Mammary epithelial cell (primary cell): ENCODE measurements at regions of chr6 and their contacts with region 1.

Region 1: DNA sequence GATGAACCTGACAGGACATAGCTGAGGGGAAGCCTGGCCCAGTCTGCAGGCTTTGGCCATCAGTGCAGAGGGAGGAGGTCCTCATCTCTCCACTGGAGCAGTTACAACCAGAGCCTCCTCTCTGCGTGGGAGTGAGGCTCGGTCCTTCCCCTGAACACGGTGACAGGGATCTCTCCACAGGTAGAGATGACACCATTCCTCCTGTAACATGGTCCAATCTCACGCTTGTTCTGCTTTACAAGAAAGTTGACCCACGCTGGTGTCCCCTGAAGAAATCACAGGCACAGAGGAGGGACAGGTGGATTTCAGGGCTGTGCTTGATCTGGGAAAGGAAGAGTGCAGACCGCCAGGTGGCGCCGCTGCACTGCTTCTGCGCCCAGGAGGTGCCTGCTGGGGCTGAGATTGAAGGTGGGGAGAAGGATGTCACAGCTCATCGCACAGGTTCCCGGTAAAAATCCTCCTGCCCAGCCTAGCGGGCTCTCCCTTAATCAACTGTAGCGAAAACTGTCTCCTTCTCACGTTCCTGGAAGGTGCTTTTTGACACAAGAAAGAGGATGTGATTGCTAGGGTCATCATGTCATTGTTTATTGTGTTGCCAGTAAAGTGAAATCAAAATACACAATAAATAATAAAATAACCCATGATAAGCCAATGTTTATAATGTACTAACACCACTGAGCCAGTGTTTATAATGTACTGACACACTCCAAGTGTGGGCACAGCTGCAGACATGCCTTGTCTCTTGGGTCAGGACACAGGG is 20.4 kb downstream of the HLA-G start:
- DNase-seq: peak; percentile 56
- H3K4me3 ChIP-seq: no peak overlapping the region
- H3K27ac ChIP-seq: no peak overlapping the region
- H3K4me1 ChIP-seq: peaks cover 5% of the 10 kb centered on the region
- H3K27me3 ChIP-seq: no peaks in the 10 kb centered on the region
- CTCF ChIP-seq: peak; percentile 78 to 96

Region 2: GRCh38 chr6:29632789-29633533 is 215.1 kb before region 1 on chr6 and contains the start of gene GABBR1:
- CTCF ChIA-PET with region 1: interaction called, 12 read pairs
- dilution Hi-C with region 1: no loop called
- in situ Hi-C with region 1: no loop called
- intact Hi-C with region 1: no loop called
- DNase-seq: peak; percentile 92
- H3K4me3 ChIP-seq: peak within 1 kb of the TSS; percentile 60 to 84 (median 65)
- H3K27ac ChIP-seq: peak within 1 kb of the TSS; percentile 22
- H3K4me1 ChIP-seq: peaks cover 43% of the 10 kb centered on the region
- H3K27me3 ChIP-seq: no peaks in the 10 kb centered on the region
- CTCF ChIP-seq: no peak
- total RNA-seq, gene GABBR1: 14.5 to 78.4 TPM

Region 3: DNA sequence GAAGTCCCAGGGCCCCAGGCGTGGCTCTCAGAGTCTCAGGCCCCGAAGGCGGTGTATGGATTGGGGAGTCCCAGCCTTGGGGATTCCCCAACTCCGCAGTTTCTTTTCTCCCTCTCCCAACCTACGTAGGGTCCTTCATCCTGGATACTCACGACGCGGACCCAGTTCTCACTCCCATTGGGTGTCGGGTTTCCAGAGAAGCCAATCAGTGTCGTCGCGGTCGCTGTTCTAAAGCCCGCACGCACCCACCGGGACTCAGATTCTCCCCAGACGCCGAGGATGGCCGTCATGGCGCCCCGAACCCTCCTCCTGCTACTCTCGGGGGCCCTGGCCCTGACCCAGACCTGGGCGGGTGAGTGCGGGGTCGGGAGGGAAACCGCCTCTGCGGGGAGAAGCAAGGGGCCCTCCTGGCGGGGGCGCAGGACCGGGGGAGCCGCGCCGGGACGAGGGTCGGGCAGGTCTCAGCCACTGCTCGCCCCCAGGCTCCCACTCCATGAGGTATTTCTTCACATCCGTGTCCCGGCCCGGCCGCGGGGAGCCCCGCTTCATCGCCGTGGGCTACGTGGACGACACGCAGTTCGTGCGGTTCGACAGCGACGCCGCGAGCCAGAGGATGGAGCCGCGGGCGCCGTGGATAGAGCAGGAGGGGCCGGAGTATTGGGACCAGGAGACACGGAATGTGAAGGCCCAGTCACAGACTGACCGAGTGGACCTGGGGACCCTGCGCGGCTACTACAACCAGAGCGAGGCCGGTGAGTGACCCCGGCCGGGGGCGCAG is 94.4 kb after region 1 on chr6 and contains the start of gene HLA-A:
- CTCF ChIA-PET with region 1: no interaction called
- dilution Hi-C with region 1: no loop called
- in situ Hi-C with region 1: no loop called
- intact Hi-C with region 1: loop called (anchors 1 kb)
- DNase-seq: peak; percentile 97
- H3K4me3 ChIP-seq: peak within 1 kb of the TSS; percentile 65 to 84 (median 75)
- H3K27ac ChIP-seq: peak within 1 kb of the TSS; percentile 93
- H3K4me1 ChIP-seq: peaks cover 8% of the 10 kb centered on the region
- H3K27me3 ChIP-seq: no peaks in the 10 kb centered on the region
- CTCF ChIP-seq: peak in 1 of 2 donors; percentile 13
- total RNA-seq, gene HLA-A: 217 to 345 TPM

Region 4: GRCh38 chr6:30006170-30007131 is 158.4 kb after region 1 on chr6:
- CTCF ChIA-PET with region 1: no interaction called
- dilution Hi-C with region 1: no loop called
- in situ Hi-C with region 1: loop called (anchors 5 kb)
- intact Hi-C with region 1: no loop called
- DNase-seq: no peak
- H3K4me3 ChIP-seq: peak overlapping the region; percentile 3 to 40 (median 36)
- H3K27ac ChIP-seq: no peak overlapping the region
- H3K4me1 ChIP-seq: peaks cover 17% of the 10 kb centered on the region
- H3K27me3 ChIP-seq: peaks cover 7% of the 10 kb centered on the region
- CTCF ChIP-seq: no peak

Region 5: DNA sequence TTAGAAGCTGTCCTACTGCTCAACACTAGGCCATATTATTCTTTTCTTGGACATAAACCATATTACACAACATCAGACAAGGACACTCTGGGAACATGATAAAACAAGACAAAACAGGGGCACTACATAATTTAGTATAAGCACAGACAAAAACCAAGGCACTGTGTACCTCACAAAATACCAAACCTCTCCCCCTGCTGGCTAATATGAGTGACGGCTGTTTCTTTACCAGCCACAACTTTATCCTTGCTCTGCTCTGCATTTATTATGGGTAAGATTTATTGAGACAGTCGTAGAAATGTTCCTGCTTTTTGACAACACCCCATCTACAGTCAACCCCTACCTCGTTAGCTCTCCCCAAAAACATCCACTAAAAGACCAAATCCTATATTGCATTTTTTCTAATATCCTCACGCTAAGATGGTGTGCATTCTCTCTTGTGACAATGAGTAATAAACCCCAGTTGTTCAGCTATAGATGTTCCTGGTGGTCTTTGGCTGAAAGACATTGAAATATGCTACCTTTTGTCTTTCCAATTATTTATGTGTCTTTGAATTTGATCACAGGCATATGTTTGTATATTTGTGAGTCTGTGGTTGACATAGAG is 189.2 kb after region 1 on chr6:
- CTCF ChIA-PET with region 1: no interaction called
- dilution Hi-C with region 1: no loop called
- in situ Hi-C with region 1: no loop called
- intact Hi-C with region 1: loop called (anchors 1 kb)
- DNase-seq: peak; percentile 32
- H3K4me3 ChIP-seq: no peak overlapping the region
- H3K27ac ChIP-seq: no peak overlapping the region
- H3K4me1 ChIP-seq: no peaks in the 10 kb centered on the region
- H3K27me3 ChIP-seq: no peaks in the 10 kb centered on the region
- CTCF ChIP-seq: peak; percentile 67 to 70

Region 6: DNA sequence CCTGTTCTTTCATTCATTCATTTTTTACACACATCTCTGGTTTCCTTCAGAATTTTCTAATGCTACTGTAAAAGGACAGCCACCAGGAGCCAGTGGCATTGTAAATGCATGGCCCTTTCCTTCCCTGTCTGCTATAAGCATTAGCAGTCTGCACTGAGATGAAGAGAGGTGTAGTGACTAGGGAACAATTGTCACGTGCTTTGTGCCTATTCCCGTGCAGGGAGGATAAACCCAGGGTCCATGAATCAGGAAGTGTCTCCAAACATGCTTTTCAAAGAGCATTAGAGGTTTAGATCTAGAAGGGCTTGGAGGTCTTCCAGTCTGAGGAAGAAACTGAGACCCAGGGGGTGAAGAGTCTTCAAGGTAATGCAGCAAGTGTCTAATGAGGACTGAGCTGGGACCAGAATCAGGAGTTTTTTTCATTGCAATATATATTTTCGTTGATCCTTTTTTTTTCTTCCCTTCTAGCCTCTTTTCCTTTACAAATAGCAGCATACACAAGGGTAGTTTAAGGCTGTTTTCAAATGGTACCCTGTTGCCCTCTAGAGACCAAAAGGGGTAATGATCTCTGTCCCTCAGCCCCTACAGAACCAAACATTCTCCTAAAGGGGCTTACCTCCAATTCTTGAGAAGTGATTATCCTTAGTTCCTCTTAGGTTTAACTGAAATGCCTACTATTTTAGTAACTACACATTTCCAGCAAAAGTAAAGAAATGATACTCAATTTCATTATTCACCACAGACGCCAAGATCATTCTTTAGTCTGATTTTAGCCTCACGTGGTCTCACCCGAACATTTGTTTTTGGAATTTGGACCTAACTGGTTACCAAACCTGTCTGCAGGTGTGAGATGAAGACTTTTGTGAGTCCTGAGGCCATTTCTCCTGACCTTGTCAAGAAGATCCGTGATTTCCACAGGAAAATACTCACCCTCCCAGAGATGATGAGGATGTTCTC is 321.9 kb after region 1 on chr6:
- CTCF ChIA-PET with region 1: no interaction called
- dilution Hi-C with region 1: no loop called
- in situ Hi-C with region 1: loop called in 1 of 2 experiments (anchors 25 kb)
- intact Hi-C with region 1: loop called (anchors 1 kb)
- DNase-seq: peak; percentile 41
- H3K4me3 ChIP-seq: no peak overlapping the region
- H3K27ac ChIP-seq: no peak overlapping the region
- H3K4me1 ChIP-seq: no peaks in the 10 kb centered on the region
- H3K27me3 ChIP-seq: peaks cover 14% of the 10 kb centered on the region
- CTCF ChIP-seq: peak; percentile 85 to 90